ENCODE measurements at regions of chr7 and their contacts with region 1.

Region 1: GRCh38 chr7:136114966-136115762 is 138.0 kb upstream of the MTPN start:
- DNase-seq: peak; percentile 52
- ATAC-seq: peak; percentile 99
- H3K4me3 ChIP-seq: no peak overlapping the region
- H3K27ac ChIP-seq: no peak overlapping the region
- H3K4me1 ChIP-seq: no peaks in the 10 kb centered on the region
- H3K27me3 ChIP-seq: no peaks in the 10 kb centered on the region
- CTCF ChIP-seq: peak; percentile 68
- POLR2A ChIP-seq: no peak
- RAD21 ChIP-seq: peak; percentile 58

Region 2: GRCh38 chr7:135930565-135931461 is 184.4 kb before region 1 on chr7:
- CTCF ChIA-PET with region 1: no interaction called
- POLR2A ChIA-PET with region 1: no interaction called
- dilution Hi-C with region 1: no loop called
- in situ Hi-C with region 1: no loop called
- intact Hi-C with region 1: no loop called
- DNase-seq: peak; percentile 62
- ATAC-seq: peak; percentile 63
- H3K4me3 ChIP-seq: no peak overlapping the region
- H3K27ac ChIP-seq: no peak overlapping the region
- H3K4me1 ChIP-seq: peaks cover 13% of the 10 kb centered on the region
- H3K27me3 ChIP-seq: no peaks in the 10 kb centered on the region
- CTCF ChIP-seq: no peak
- POLR2A ChIP-seq: no peak
- RAD21 ChIP-seq: no peak

Region 3: GRCh38 chr7:137626469-137627067 is 1511.4 kb after region 1 on chr7:
- CTCF ChIA-PET with region 1: no interaction called
- POLR2A ChIA-PET with region 1: no interaction called
- dilution Hi-C with region 1: no loop called
- in situ Hi-C with region 1: loop called (anchors 25 kb)
- intact Hi-C with region 1: loop called (anchors 5 kb)
- DNase-seq: peak; percentile 52
- ATAC-seq: peak; percentile 96
- H3K4me3 ChIP-seq: no peak overlapping the region
- H3K27ac ChIP-seq: no peak overlapping the region
- H3K4me1 ChIP-seq: no peaks in the 10 kb centered on the region
- H3K27me3 ChIP-seq: no peaks in the 10 kb centered on the region
- CTCF ChIP-seq: peak; percentile 76
- POLR2A ChIP-seq: no peak
- RAD21 ChIP-seq: peak; percentile 74

Measured in IMR-90 (cell line).